ENCODE measurements at regions of chr14 and their contacts with region 1.

Region 1: DNA sequence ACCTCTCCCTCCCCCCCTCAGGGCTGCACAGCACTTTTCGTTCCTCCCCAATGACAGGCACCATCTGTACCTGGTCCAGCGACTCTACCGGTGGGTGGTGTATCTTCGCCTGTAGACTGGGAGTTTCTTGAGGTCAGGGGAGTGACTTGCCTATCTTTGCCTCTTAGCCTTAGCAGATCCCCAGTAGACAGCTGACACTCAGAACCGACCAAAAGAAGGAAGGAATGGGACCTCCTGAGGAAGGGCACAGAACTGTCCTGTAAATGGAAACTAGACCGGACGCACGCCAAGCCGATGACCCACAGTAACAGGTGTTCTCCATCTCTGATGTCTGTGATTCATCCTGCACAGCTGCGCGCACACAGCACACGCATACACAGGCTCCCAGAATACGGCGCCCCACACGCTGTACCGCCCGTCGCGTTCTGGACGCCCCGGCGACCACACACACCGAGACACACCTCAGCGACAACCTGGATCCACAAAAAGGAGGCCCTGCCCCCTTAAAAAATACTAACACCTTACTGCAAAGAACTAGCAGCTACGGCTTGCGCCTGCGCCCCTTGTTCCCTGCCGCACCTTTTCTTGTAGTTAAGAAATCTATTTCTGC is 673 bp upstream of the TTC9 start:
- DNase-seq: peak in 7 of 9 experiments; percentile 30 to 79 (median 66)
- ATAC-seq: peak; percentile 66
- H3K4me3 ChIP-seq: peak overlapping the region; percentile 59 to 63
- H3K4me3 Mint-ChIP-seq: peak overlapping the region; percentile 99
- H3K27ac ChIP-seq: peak overlapping the region; percentile 24 to 26
- H3K27ac Mint-ChIP-seq: peak overlapping the region; percentile 97
- H3K4me1 ChIP-seq: peaks cover 33% of the 10 kb centered on the region
- H3K4me1 Mint-ChIP-seq: peaks cover 51% of the 10 kb centered on the region
- H3K27me3 ChIP-seq: no peaks in the 10 kb centered on the region
- H3K27me3 Mint-ChIP-seq: no peaks in the 10 kb centered on the region
- CTCF ChIP-seq: no peak

Region 2: GRCh38 chr14:70622111-70622712 is 18.8 kb before region 1 on chr14:
- CTCF ChIA-PET with region 1: interaction called, 6 read pairs
- POLR2A ChIA-PET with region 1: interaction called, 3 read pairs
- intact Hi-C with region 1: loop called in 1 of 2 experiments (anchors 1 kb)
- DNase-seq: peak in 8 of 9 experiments; percentile 31 to 73 (median 62)
- ATAC-seq: peak; percentile 96
- H3K4me3 ChIP-seq: no peak overlapping the region
- H3K4me3 Mint-ChIP-seq: no peak overlapping the region
- H3K27ac ChIP-seq: no peak overlapping the region
- H3K27ac Mint-ChIP-seq: no peak overlapping the region
- H3K4me1 ChIP-seq: no peaks in the 10 kb centered on the region
- H3K4me1 Mint-ChIP-seq: peaks cover 3% of the 10 kb centered on the region
- H3K27me3 ChIP-seq: peaks cover 0 to 2% of the 10 kb centered on the region in 2 experiments
- H3K27me3 Mint-ChIP-seq: no peaks in the 10 kb centered on the region
- CTCF ChIP-seq: peak; percentile 93

Region 3: GRCh38 chr14:70660949-70661893 is 20.2 kb after region 1 on chr14:
- CTCF ChIA-PET with region 1: interaction called, 18 read pairs
- POLR2A ChIA-PET with region 1: interaction called, 32 read pairs
- intact Hi-C with region 1: loop called (anchors 1 to 2 kb)
- DNase-seq: peak; percentile 25 to 84 (median 65)
- ATAC-seq: peak; percentile 76
- H3K4me3 ChIP-seq: peak overlapping the region in 1 of 2 experiments; percentile 18
- H3K4me3 Mint-ChIP-seq: peak overlapping the region; percentile 78
- H3K27ac ChIP-seq: peak overlapping the region; percentile 44 to 50
- H3K27ac Mint-ChIP-seq: peak overlapping the region; percentile 89
- H3K4me1 ChIP-seq: peaks cover 87% of the 10 kb centered on the region
- H3K4me1 Mint-ChIP-seq: peaks cover 92% of the 10 kb centered on the region
- H3K27me3 ChIP-seq: no peaks in the 10 kb centered on the region
- H3K27me3 Mint-ChIP-seq: no peaks in the 10 kb centered on the region
- CTCF ChIP-seq: no peak

Region 4: DNA sequence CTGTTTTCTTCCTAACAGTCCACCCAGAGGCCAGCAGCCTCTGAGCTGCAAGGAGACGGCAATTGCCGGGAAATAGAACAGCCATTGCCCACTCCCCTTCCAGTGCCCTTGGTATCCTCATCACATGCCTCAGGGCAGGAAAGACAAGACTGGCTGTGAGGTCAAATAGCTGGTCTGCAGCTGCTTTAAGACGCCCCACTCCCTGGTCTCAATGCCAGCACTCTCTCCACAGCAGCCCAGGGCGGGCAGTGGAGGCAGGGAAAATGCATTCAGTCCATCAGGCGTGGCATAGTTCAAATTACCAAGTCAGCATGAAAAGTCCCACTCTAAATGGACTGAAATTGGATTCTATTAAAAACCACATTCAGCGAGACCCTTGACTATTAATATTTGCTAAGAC is 36.3 kb after region 1 on chr14:
- CTCF ChIA-PET with region 1: no interaction called
- POLR2A ChIA-PET with region 1: no interaction called
- intact Hi-C with region 1: loop called (anchors 5 kb)
- DNase-seq: no peak
- ATAC-seq: no peak
- H3K4me3 ChIP-seq: no peak overlapping the region
- H3K4me3 Mint-ChIP-seq: no peak overlapping the region
- H3K27ac ChIP-seq: no peak overlapping the region
- H3K27ac Mint-ChIP-seq: no peak overlapping the region
- H3K4me1 ChIP-seq: no peaks in the 10 kb centered on the region
- H3K4me1 Mint-ChIP-seq: peaks cover 1% of the 10 kb centered on the region
- H3K27me3 ChIP-seq: no peaks in the 10 kb centered on the region
- H3K27me3 Mint-ChIP-seq: no peaks in the 10 kb centered on the region
- CTCF ChIP-seq: no peak

Region 5: GRCh38 chr14:70934502-70935134 is 293.6 kb after region 1 on chr14:
- CTCF ChIA-PET with region 1: no interaction called
- POLR2A ChIA-PET with region 1: no interaction called
- intact Hi-C with region 1: loop called in 1 of 2 experiments (anchors 10 kb)
- DNase-seq: peak in 1 of 9 experiments; percentile 37
- ATAC-seq: peak; percentile 67
- H3K4me3 ChIP-seq: peak overlapping the region in 1 of 2 experiments; percentile 8
- H3K4me3 Mint-ChIP-seq: peak overlapping the region; percentile 66
- H3K27ac ChIP-seq: peak overlapping the region; percentile 18 to 61
- H3K27ac Mint-ChIP-seq: peak overlapping the region; percentile 84
- H3K4me1 ChIP-seq: peaks cover 25% of the 10 kb centered on the region
- H3K4me1 Mint-ChIP-seq: peaks cover 84% of the 10 kb centered on the region
- H3K27me3 ChIP-seq: no peaks in the 10 kb centered on the region
- H3K27me3 Mint-ChIP-seq: no peaks in the 10 kb centered on the region
- CTCF ChIP-seq: no peak